Activated B cell treated with CpG ODN at 0.5 μM for 24 hours (primary cell): ENCODE measurements at regions of chr4 and their contacts with region 1.

Region 1: DNA sequence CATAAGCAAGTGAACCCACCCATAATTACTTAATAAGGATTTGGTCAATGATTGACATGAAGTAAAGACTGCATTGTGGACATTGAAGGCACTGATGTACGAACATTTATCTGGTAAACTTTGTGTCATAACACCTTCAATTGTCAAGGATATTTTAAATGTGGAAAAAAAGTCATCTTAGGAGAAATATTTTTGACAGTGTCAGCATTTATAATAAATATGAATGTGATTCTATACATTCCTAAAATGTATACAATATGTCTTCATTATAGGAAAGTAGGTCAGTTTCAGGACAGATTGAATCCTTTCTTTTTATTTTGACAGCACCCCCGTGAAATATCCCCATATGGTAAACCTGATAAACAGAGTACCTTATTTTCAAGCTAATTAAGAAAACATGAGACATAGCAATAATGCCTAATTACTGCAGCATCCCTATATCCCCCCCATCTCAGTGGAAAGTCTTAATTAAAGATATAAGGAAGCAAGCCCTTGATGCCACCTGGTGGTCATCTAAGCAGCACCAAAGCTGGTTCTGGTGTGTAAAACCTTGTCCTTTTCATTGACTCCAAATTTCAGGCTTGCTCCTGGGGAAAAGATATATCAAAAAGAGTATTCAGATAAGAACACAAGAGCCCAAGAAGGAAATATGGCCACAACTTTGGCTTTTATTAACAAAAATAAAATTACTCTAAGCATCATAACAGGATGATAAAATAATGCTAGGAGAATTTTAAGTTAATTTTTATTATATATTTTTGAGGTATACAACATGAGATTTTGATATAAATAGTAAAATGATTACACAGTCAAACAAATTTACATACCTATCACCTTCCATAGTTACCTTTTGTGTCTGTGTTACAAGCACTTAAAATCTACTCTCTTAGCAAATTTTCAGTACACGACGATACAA is 379.7 kb downstream of the TLL1 start:
- DNase-seq: no peak
- ATAC-seq: no peak
- H3K4me3 Mint-ChIP-seq: no peak overlapping the region
- H3K27ac Mint-ChIP-seq: no peak overlapping the region
- H3K4me1 Mint-ChIP-seq: no peaks in the 10 kb centered on the region
- H3K27me3 Mint-ChIP-seq: no peaks in the 10 kb centered on the region
- CTCF ChIP-seq: no peak

Region 2: DNA sequence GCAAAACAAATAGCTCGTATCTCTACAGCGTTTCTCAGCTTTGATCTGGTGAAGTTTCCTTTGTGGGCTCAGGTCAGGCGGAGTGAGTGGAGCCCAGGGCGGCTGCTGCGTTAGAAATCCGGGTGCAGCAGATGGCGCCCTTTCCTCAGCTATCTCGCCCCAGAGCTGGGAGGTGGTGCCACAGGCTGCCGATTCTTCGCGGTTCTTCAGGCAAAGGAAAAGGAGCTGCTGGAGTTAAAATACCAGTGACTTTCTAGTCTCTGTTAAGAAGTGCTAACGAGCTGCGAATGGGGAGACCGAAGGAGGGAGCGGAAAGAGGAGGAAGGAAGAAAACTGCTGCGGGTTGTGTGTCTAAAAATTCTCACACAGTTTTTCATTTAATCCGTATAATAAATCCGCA is 759.4 kb before region 1 on chr4:
- CTCF ChIA-PET with region 1: no interaction called
- POLR2A ChIA-PET with region 1: no interaction called
- intact Hi-C with region 1: loop called (anchors 5 kb)
- DNase-seq: peak; percentile 29
- ATAC-seq: no peak
- H3K4me3 Mint-ChIP-seq: no peak overlapping the region
- H3K27ac Mint-ChIP-seq: no peak overlapping the region
- H3K4me1 Mint-ChIP-seq: peaks cover 6% of the 10 kb centered on the region
- H3K27me3 Mint-ChIP-seq: peaks cover 20% of the 10 kb centered on the region
- CTCF ChIP-seq: no peak

Region 3: GRCh38 chr4:166153548-166153947 is 99.2 kb before region 1 on chr4:
- CTCF ChIA-PET with region 1: no interaction called
- POLR2A ChIA-PET with region 1: no interaction called
- intact Hi-C with region 1: no loop called
- DNase-seq: no peak
- ATAC-seq: no peak
- H3K4me3 Mint-ChIP-seq: no peak overlapping the region
- H3K27ac Mint-ChIP-seq: no peak overlapping the region
- H3K4me1 Mint-ChIP-seq: no peaks in the 10 kb centered on the region
- H3K27me3 Mint-ChIP-seq: no peaks in the 10 kb centered on the region
- CTCF ChIP-seq: no peak

Region 4: GRCh38 chr4:166165829-166166420 is 86.8 kb before region 1 on chr4:
- CTCF ChIA-PET with region 1: no interaction called
- POLR2A ChIA-PET with region 1: no interaction called
- intact Hi-C with region 1: loop called (anchors 1 kb)
- DNase-seq: no peak
- ATAC-seq: peak; percentile 60
- H3K4me3 Mint-ChIP-seq: no peak overlapping the region
- H3K27ac Mint-ChIP-seq: no peak overlapping the region
- H3K4me1 Mint-ChIP-seq: no peaks in the 10 kb centered on the region
- H3K27me3 Mint-ChIP-seq: no peaks in the 10 kb centered on the region
- CTCF ChIP-seq: no peak

Region 5: DNA sequence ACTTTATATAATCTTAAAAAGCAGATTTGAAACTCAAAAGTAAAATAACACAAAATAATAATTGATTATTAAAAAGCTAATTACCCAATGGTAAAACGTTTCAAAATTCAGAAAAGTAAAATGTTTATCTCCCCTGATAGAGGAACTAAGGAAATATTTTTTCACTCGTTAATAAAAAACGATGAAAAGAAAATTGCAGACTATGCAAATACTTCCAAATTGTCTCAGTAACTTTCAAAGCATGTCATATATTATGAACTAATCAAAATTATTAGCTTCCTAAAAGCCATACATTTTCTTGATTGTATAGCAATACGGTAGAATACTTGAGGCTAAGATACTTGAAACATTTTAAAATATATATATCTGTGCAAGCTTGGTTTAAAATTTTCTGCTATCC is 13.4 kb before region 1 on chr4:
- CTCF ChIA-PET with region 1: no interaction called
- POLR2A ChIA-PET with region 1: no interaction called
- intact Hi-C with region 1: no loop called
- DNase-seq: no peak
- ATAC-seq: no peak
- H3K4me3 Mint-ChIP-seq: no peak overlapping the region
- H3K27ac Mint-ChIP-seq: no peak overlapping the region
- H3K4me1 Mint-ChIP-seq: no peaks in the 10 kb centered on the region
- H3K27me3 Mint-ChIP-seq: no peaks in the 10 kb centered on the region
- CTCF ChIP-seq: no peak

Region 6: DNA sequence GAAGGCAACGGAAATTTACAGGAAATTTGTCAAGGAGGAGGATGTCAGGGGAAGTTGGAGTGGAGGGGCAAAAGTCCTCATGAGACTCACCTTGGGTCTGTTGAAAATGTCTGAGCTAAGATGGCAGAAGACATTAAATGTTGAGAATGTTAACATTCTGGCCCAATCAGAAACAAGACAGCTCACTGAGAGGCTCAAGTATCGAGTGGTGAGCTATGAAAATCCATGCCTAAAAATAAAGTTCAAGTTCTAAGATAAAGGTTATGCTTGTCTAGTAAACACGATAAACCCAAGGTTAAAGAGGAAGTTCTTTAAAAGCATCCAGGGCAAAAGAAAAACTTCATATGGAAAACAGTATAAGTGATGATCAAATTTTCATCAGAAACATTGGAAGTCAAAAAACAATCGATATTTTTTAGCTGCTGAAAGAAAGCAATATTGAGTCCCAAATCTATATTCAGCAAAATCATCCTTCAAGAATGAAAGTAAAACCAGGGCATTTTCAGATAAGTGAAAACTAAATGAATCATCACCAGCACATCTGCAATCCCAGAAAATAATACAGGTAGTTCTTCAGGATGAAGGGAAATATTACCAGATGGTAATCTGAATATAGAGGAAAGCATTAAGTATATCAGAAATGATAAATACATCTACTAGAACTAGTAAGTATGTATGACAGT is 82.7 kb after region 1 on chr4:
- CTCF ChIA-PET with region 1: no interaction called
- POLR2A ChIA-PET with region 1: no interaction called
- intact Hi-C with region 1: no loop called
- DNase-seq: no peak
- ATAC-seq: no peak
- H3K4me3 Mint-ChIP-seq: no peak overlapping the region
- H3K27ac Mint-ChIP-seq: no peak overlapping the region
- H3K4me1 Mint-ChIP-seq: no peaks in the 10 kb centered on the region
- H3K27me3 Mint-ChIP-seq: no peaks in the 10 kb centered on the region
- CTCF ChIP-seq: no peak